ENCODE measurements at regions of chr3 and their contacts with region 1.

Region 1: GRCh38 chr3:186826976-186827731 is 15.4 kb upstream of the ADIPOQ start:
- DNase-seq: peak; percentile 79 to 92 (median 87)
- ATAC-seq: peak; percentile 96
- H3K4me3 ChIP-seq: peak overlapping the region; percentile 66
- H3K4me3 Mint-ChIP-seq: peak overlapping the region; percentile 53 to 91 (median 80)
- H3K27ac ChIP-seq: peak overlapping the region; percentile 52
- H3K27ac Mint-ChIP-seq: peak overlapping the region in 2 of 9 donors; percentile 18 to 19
- H3K4me1 ChIP-seq: peaks cover 6 to 21% of the 10 kb centered on the region in 2 donors
- H3K4me1 Mint-ChIP-seq: peaks cover 15 to 24% (median 20%) of the 10 kb centered on the region in 7 donors
- H3K27me3 ChIP-seq: peaks cover 0 to 22% of the 10 kb centered on the region in 2 donors
- H3K27me3 Mint-ChIP-seq: peaks cover 45 to 61% (median 52%) of the 10 kb centered on the region in 5 donors

Region 2: DNA sequence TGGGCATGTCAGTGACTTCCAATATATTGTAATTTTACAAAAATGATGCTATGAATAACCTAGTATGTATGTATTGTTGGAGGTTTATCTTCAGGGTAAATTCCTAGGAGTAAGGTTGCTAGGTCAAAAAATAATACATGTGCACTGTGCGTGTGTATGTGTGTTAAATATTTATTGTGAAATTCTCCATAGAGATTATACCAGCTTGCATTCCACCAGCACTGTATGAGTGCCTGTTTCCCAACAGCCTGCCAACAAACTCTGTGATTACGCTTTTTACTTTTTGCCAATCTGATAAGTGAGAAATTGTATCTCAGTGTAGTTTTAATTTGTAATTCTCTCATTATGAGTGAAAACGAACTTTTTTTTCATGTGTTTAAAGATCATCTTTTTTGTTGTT is 989.7 kb before region 1 on chr3:
- CTCF ChIA-PET with region 1: no interaction called
- POLR2A ChIA-PET with region 1: no interaction called
- intact Hi-C with region 1: no loop called
- DNase-seq: no peak
- ATAC-seq: no peak
- H3K4me3 ChIP-seq: no peak overlapping the region
- H3K4me3 Mint-ChIP-seq: no peak overlapping the region
- H3K27ac ChIP-seq: no peak overlapping the region
- H3K27ac Mint-ChIP-seq: no peak overlapping the region
- H3K4me1 ChIP-seq: no peaks in the 10 kb centered on the region
- H3K4me1 Mint-ChIP-seq: no peaks in the 10 kb centered on the region
- H3K27me3 ChIP-seq: no peaks in the 10 kb centered on the region
- H3K27me3 Mint-ChIP-seq: peaks cover 5 to 26% (median 18%) of the 10 kb centered on the region in 5 donors

Region 3: GRCh38 chr3:185976977-185977678 is 850.0 kb before region 1 on chr3:
- CTCF ChIA-PET with region 1: no interaction called
- POLR2A ChIA-PET with region 1: no interaction called
- intact Hi-C with region 1: loop called in 1 of 2 experiments (anchors 10 kb)
- DNase-seq: peak; percentile 47 to 84 (median 70)
- ATAC-seq: peak; percentile 96
- H3K4me3 ChIP-seq: no peak overlapping the region
- H3K4me3 Mint-ChIP-seq: peak overlapping the region in 1 of 10 donors; percentile 5
- H3K27ac ChIP-seq: no peak overlapping the region
- H3K27ac Mint-ChIP-seq: peak overlapping the region in 1 of 9 donors; percentile 21
- H3K4me1 ChIP-seq: no peaks in the 10 kb centered on the region
- H3K4me1 Mint-ChIP-seq: peaks cover 4 to 10% (median 9%) of the 10 kb centered on the region in 7 donors
- H3K27me3 ChIP-seq: no peaks in the 10 kb centered on the region
- H3K27me3 Mint-ChIP-seq: peaks cover 0 to 19% (median 0%) of the 10 kb centered on the region in 5 donors

Region 4: DNA sequence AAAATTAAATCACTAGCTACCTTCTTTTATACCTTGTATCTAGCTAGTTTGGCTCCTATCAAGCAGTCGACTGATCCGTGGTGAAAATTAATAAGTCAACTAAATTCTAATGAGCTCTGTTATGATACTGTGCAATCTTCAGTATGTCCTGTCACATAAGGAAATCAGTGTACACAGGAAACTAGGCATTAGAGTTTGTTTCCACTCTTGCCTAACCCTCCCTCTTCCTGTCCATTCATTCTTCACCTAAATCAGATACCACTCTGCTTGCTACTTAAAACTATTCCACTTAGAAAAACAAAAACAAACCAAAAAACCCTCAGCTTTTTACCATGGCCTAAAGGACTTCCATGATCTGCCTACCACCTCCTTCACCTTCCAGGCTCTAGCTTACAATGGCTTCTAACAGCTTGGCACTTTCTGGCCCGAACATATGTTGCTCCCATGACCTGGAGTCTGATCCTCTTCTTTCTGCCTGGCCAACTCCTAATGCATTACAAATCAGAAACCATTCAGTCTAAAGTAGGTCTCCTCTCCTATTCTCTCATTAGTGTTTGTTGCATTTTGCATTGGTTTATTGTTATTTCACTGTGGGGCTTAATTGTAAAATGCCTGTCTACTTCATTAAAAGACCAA is 28.8 kb before region 1 on chr3:
- CTCF ChIA-PET with region 1: no interaction called
- POLR2A ChIA-PET with region 1: no interaction called
- intact Hi-C with region 1: no loop called
- DNase-seq: no peak
- ATAC-seq: no peak
- H3K4me3 ChIP-seq: no peak overlapping the region
- H3K4me3 Mint-ChIP-seq: no peak overlapping the region
- H3K27ac ChIP-seq: no peak overlapping the region
- H3K27ac Mint-ChIP-seq: peak overlapping the region in 2 of 9 donors; percentile 36 to 59
- H3K4me1 ChIP-seq: peaks cover 0 to 2% of the 10 kb centered on the region in 2 donors
- H3K4me1 Mint-ChIP-seq: peaks cover 6 to 31% (median 17%) of the 10 kb centered on the region in 7 donors
- H3K27me3 ChIP-seq: no peaks in the 10 kb centered on the region
- H3K27me3 Mint-ChIP-seq: no peaks in the 10 kb centered on the region